ENCODE measurements at regions of chr7 and their contacts with region 1.

Region 1: DNA sequence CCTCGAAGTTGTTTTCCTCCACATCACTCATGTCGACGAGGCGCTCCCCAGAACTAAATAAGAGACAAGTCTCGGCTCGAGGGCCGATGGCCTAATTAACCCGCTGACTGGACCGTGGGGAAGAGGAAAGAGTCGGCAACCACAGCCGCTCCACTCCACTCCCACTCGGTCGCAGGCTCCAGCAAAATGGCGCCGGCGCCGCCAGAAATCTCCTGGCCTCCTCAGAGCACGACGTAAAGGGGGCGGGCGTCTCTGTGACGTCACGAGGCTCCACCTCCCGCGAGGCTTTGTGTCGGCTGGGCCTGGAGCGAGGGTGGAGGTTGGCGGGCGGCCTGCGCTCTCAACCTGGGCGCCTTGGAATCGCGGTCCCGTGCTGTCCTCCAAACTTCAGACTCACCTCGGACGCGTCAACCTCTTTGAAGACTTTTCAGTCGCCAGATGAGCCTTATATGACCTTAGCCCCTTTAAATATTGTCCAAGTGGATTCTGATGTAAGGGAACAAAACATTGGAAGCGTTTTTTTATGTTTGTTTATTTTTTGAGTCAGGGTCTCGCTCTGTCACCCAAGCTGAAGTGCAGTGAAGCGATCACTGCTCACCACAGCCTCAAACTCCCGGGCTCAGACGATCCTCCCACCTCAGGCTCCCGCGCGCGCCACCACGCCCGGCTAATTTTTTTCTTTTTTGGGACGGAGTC is at the start of gene TRA2A:
- DNase-seq: peak; percentile 94 to 100 (median 98)

Region 2: DNA sequence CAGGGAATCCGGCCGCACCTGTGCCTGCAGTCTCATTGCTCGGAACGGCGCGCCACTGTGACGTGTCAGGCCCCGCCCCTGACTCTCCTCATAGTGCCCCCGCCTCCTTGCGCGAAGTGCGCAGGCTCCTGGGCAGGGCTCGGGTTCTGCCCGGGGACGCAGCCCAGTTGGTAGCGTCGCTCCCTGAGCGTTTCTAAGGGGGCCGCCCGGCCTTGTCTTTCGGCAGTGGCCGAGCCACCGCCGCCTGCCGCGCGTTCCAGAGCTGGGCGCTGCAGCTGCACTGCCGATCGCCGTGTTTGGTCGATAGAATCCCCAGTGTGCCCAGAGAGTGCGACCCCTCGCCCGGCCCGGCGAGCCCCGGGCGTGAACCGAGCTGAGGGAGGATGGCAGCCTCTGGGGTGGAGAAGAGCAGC is 426.3 kb before region 1 on chr7 and contains the start of gene KLHL7:
- intact Hi-C with region 1: loop called (anchors 5 kb)
- DNase-seq: peak; percentile 94 to 99 (median 97)

Region 3: DNA sequence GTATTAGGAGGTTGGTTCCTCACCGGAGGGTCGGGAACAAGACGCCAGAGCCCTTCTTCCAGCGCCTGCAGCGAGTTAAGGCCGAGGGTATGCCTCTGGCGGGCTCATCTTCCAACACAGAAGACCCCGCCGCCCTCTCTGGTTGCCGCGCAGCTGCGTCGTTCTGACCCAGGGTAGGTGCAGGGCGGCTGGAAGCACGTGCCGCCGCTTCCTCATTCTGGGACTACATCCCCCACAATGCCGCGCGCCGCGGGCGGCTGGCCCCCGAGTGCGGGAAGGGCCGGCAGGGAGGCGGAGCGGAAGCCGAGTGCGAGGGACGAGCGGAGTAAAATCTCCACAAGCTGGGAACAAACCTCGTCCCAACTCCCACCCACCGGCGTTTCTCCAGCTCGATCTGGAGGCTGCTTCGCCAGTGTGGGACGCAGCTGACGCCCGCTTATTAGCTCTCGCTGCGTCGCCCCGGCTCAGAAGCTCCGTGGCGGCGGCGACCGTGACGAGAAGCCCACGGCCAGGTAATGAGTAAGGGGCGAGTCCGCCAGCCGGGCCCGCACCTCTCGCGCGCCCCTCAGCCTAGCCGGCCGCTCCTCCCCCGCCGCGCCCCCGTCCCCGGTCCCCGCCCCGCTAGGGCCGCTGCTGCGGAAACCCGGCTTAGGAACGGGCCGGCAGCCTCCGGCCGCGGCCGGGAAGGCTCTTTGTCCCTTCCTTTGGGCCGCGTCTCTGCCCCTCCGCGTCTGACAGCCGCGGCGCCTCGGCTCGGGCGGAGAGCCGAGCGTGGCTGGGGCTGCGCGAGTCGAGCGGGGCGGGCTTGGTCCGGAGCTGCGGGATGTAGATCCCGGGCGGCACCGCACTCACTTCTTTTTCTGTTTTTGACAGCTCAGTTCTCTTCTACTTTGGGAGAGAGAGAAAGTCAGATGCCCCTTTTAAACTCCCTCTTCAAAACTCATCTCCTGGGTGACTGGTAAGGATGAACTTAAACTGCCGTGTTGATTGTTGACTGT is 65.5 kb after region 1 on chr7 and contains the start of gene CCDC126:
- intact Hi-C with region 1: loop called (anchors 2 kb)
- DNase-seq: peak; percentile 89 to 99 (median 94)

Region 4: GRCh38 chr7:23712368-23713284 is 180.7 kb after region 1 on chr7:
- intact Hi-C with region 1: no loop called
- DNase-seq: no peak

Measured in posterior cingulate gyrus (tissue), 11 donors.